ENCODE measurements at regions of chr9 and their contacts with region 1.

Region 1: GRCh38 chr9:107465467-107466451 is 23.8 kb downstream of the KLF4 start:
- DNase-seq: peak; percentile 75
- H3K4me3 ChIP-seq: peak overlapping the region; percentile 47 to 68 (median 58)
- H3K27ac ChIP-seq: peak overlapping the region in 3 of 4 donors; percentile 69 to 74 (median 70)
- H3K4me1 ChIP-seq: peaks cover 0 to 14% (median 9%) of the 10 kb centered on the region in 4 donors
- H3K27me3 ChIP-seq: peaks cover 8% of the 10 kb centered on the region
- CTCF ChIP-seq: peak; percentile 75 to 93 (median 91)
- EP300 ChIP-seq: no peak
- POLR2A ChIP-seq: peak; percentile 18

Region 2: DNA sequence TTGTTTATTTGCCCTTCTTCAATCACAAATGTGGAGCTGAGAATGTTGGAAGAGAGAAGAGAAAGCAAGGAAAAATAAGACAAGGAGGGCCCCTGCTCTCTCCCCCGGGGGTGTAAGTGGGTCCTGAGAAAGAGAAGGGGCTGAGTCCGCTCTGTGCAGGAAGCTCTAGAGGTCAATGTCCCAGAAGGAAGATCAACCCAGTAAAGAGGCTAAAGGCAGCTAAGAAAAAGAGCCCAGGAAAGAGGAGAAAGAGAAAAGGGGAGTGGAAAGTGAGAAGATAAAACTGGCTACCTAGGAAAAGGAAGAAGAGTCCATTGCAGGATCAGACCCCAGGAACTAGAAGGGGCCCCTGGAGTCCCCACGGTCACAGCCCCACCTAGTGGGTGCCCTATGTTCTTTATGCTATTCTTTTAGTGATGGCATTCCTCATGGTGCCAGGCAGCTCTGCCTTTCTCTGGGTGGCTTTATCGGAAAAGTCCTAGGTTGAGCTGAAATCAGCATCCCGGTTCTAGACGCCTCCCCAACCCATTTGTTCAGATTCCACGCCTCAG is 806.7 kb after region 1 on chr9:
- in situ Hi-C with region 1: loop called in 3 of 4 experiments (anchors 10 to 25 kb)
- intact Hi-C with region 1: no loop called
- DNase-seq: peak; percentile 66
- H3K4me3 ChIP-seq: peak overlapping the region in 3 of 4 donors; percentile 10 to 46 (median 29)
- H3K27ac ChIP-seq: peak overlapping the region; percentile 75 to 90 (median 83)
- H3K4me1 ChIP-seq: peaks cover 7 to 28% (median 22%) of the 10 kb centered on the region in 4 donors
- H3K27me3 ChIP-seq: no peaks in the 10 kb centered on the region
- CTCF ChIP-seq: peak; percentile 52 to 81 (median 60)
- EP300 ChIP-seq: no peak
- POLR2A ChIP-seq: peak; percentile 22

Region 3: DNA sequence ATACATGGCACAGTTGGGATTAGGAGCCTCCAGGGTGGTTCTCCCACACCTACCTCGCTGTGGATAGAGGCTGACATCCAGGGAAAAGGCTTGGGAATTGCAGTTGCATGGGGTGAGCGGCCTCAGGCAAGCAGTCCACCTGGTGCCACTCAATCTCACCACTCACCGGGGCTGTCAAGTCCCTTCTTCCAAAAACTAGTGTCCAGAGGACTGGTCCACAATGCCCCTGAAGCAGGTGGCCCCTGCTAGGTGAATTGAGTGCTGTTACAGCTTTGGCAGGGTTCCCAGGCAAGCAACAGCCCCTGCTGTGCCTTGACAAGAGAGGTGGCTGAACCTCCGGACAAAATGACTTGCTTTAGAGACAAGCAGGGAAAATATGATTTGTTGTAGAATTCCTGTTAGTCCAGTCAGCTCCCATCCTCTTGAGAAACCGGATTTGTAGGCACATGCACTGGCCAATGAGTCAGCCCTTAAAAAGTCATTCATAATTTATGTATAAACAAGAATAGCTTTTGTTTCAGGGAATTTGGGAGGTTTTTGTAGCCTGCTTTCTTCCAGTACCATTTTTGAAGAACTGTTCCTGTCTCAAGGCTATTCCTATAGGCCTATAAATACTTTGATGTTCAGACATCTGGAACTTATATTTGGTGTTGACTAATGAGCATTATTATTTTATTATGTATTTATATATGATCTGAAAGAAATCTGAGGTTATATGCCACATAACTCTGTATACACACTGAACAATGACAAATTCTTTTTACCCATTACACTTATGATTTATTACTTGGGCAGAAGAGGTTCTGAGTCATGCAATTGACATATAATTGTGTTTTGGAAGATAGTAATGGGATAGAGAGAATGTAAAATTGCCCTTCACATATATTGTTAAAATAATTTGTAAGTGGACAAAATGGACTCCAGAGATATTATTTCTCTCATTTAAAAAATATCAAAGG is 978.9 kb after region 1 on chr9:
- in situ Hi-C with region 1: loop called in 1 of 4 experiments (anchors 25 kb)
- intact Hi-C with region 1: no loop called
- DNase-seq: no peak
- H3K4me3 ChIP-seq: no peak overlapping the region
- H3K27ac ChIP-seq: peak overlapping the region; percentile 26 to 66 (median 46)
- H3K4me1 ChIP-seq: peaks cover 0 to 6% (median 2%) of the 10 kb centered on the region in 4 donors
- H3K27me3 ChIP-seq: no peaks in the 10 kb centered on the region
- CTCF ChIP-seq: no peak
- EP300 ChIP-seq: no peak
- POLR2A ChIP-seq: no peak

Measured in transverse colon (tissue), 4 donors.